CD4-positive, alpha-beta memory T cell (primary cell): ENCODE measurements at regions of chr1 and their contacts with region 1.

Region 1: GRCh38 chr1:86913896-86914634 is at the start of gene SELENOF:
- DNase-seq: peak; percentile 98 to 100 (median 99)
- H3K4me3 ChIP-seq: peak within 1 kb of the TSS; percentile 82 to 91
- H3K4me3 Mint-ChIP-seq: no peak within 1 kb of the TSS
- H3K27ac ChIP-seq: peak within 1 kb of the TSS; percentile 81
- H3K27ac Mint-ChIP-seq: peak within 1 kb of the TSS in 1 of 7 donors; percentile 31
- H3K4me1 ChIP-seq: peaks cover 47% of the 10 kb centered on the region
- H3K4me1 Mint-ChIP-seq: peaks cover 29 to 43% (median 41%) of the 10 kb centered on the region in 4 donors
- H3K27me3 ChIP-seq: no peaks in the 10 kb centered on the region
- H3K27me3 Mint-ChIP-seq: no peaks in the 10 kb centered on the region
- total RNA-seq, gene SELENOF: 151 to 169 TPM

Region 2: GRCh38 chr1:86389307-86389706 is 524.8 kb before region 1 on chr1:
- CTCF ChIA-PET with region 1: interaction called, 3 read pairs
- POLR2A ChIA-PET with region 1: interaction called, 10 read pairs
- intact Hi-C with region 1: no loop called
- DNase-seq: peak in 4 of 5 donors; percentile 51 to 66 (median 55)
- H3K4me3 ChIP-seq: peak overlapping the region; percentile 9 to 12
- H3K4me3 Mint-ChIP-seq: peak overlapping the region; percentile 59 to 88 (median 83)
- H3K27ac ChIP-seq: peak overlapping the region; percentile 39
- H3K27ac Mint-ChIP-seq: peak overlapping the region; percentile 82 to 98 (median 93)
- H3K4me1 ChIP-seq: peaks cover 67% of the 10 kb centered on the region
- H3K4me1 Mint-ChIP-seq: peaks cover 45 to 68% (median 50%) of the 10 kb centered on the region in 4 donors
- H3K27me3 ChIP-seq: no peaks in the 10 kb centered on the region
- H3K27me3 Mint-ChIP-seq: no peaks in the 10 kb centered on the region

Region 3: DNA sequence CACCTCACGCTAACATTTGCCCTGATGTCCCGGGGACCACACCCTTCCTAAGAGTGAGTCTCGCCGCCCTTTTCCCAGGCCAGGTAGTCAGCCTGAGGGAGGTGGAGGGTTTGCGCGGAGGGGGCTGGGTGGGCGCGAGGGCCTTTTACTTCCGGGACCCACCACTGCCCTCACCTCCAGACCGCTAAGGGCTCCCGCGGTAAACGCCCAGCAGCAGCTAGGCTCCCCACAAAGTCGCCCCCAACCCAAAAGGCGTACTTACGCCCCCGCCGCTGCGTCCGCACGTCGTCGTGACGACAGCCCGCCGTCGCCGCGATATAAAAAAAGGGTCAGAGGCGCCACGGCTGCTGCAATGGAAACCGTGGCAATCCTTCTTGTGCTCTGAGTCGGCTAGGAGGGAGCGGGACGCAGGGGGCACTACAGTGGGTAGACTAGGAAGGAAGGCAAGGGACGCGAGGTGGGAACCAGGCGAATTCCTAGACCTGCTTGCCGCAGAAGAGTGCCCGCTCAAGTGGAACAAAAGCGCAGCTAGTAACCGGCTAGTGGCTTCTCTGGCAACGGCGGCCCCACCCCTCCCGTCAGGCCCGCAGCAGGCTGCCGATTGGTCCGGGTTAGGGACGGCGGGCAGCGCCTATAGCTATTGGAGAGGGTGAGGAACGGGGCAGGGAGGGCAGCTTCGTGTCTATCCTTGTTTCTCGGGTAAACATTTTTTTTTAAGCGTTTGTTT is 518.1 kb before region 1 on chr1 and contains the start of gene ODF2L:
- CTCF ChIA-PET with region 1: no interaction called
- POLR2A ChIA-PET with region 1: interaction called, 15 read pairs
- intact Hi-C with region 1: loop called (anchors 1 kb)
- DNase-seq: peak; percentile 90 to 94 (median 92)
- H3K4me3 ChIP-seq: peak within 1 kb of the TSS; percentile 77 to 87
- H3K4me3 Mint-ChIP-seq: peak within 1 kb of the TSS; percentile 94 to 99 (median 98)
- H3K27ac ChIP-seq: peak within 1 kb of the TSS; percentile 92
- H3K27ac Mint-ChIP-seq: peak within 1 kb of the TSS; percentile 97 to 100 (median 99)
- H3K4me1 ChIP-seq: peaks cover 56% of the 10 kb centered on the region
- H3K4me1 Mint-ChIP-seq: peaks cover 43 to 68% (median 51%) of the 10 kb centered on the region in 4 donors
- H3K27me3 ChIP-seq: no peaks in the 10 kb centered on the region
- H3K27me3 Mint-ChIP-seq: no peaks in the 10 kb centered on the region
- total RNA-seq, gene ODF2L: 97.3 to 98.3 TPM

Region 4: DNA sequence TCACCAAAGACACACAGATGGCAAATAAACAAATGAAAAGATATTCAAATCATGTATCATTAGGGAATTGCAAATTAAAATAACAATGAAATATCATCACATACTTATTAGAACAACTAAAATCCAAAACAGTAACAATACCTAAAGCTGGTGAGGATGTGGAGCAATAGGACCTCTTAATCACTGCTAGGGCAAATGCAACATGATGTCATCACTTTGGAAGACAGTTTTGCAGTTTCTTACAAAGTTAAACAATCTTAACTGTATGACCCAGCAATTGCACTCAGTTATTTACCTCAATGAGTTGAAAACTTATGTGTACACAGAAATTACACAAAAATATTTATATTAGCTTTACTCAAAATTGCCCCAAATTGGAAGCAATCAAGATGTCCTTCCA is 47.4 kb before region 1 on chr1:
- CTCF ChIA-PET with region 1: no interaction called
- POLR2A ChIA-PET with region 1: no interaction called
- intact Hi-C with region 1: loop called (anchors 10 kb)
- DNase-seq: no peak
- H3K4me3 ChIP-seq: no peak overlapping the region
- H3K4me3 Mint-ChIP-seq: no peak overlapping the region
- H3K27ac ChIP-seq: no peak overlapping the region
- H3K27ac Mint-ChIP-seq: peak overlapping the region in 2 of 7 donors; percentile 21 to 82
- H3K4me1 ChIP-seq: no peaks in the 10 kb centered on the region
- H3K4me1 Mint-ChIP-seq: peaks cover 10 to 22% (median 17%) of the 10 kb centered on the region in 4 donors
- H3K27me3 ChIP-seq: no peaks in the 10 kb centered on the region
- H3K27me3 Mint-ChIP-seq: no peaks in the 10 kb centered on the region

Region 5: GRCh38 chr1:87024936-87025540 is 111.0 kb after region 1 on chr1:
- CTCF ChIA-PET with region 1: no interaction called
- POLR2A ChIA-PET with region 1: no interaction called
- intact Hi-C with region 1: no loop called
- DNase-seq: peak in 2 of 5 donors; percentile 3 to 4
- H3K4me3 ChIP-seq: no peak overlapping the region
- H3K4me3 Mint-ChIP-seq: no peak overlapping the region
- H3K27ac ChIP-seq: no peak overlapping the region
- H3K27ac Mint-ChIP-seq: no peak overlapping the region
- H3K4me1 ChIP-seq: no peaks in the 10 kb centered on the region
- H3K4me1 Mint-ChIP-seq: peaks cover 0 to 6% (median 1%) of the 10 kb centered on the region in 4 donors
- H3K27me3 ChIP-seq: no peaks in the 10 kb centered on the region
- H3K27me3 Mint-ChIP-seq: no peaks in the 10 kb centered on the region

Region 6: GRCh38 chr1:87045761-87046304 is 131.8 kb after region 1 on chr1:
- CTCF ChIA-PET with region 1: no interaction called
- POLR2A ChIA-PET with region 1: interaction called, 5 read pairs
- intact Hi-C with region 1: loop called (anchors 10 kb)
- DNase-seq: peak; percentile 68 to 83 (median 76)
- H3K4me3 ChIP-seq: no peak overlapping the region
- H3K4me3 Mint-ChIP-seq: peak overlapping the region in 7 of 8 donors; percentile 34 to 78 (median 44)
- H3K27ac ChIP-seq: no peak overlapping the region
- H3K27ac Mint-ChIP-seq: peak overlapping the region; percentile 62 to 98 (median 96)
- H3K4me1 ChIP-seq: peaks cover 22% of the 10 kb centered on the region
- H3K4me1 Mint-ChIP-seq: peaks cover 29 to 41% (median 35%) of the 10 kb centered on the region in 4 donors
- H3K27me3 ChIP-seq: no peaks in the 10 kb centered on the region
- H3K27me3 Mint-ChIP-seq: no peaks in the 10 kb centered on the region

Region 7: GRCh38 chr1:87084244-87084836 is 170.3 kb after region 1 on chr1:
- CTCF ChIA-PET with region 1: interaction called, 7 read pairs
- POLR2A ChIA-PET with region 1: interaction called, 3 read pairs
- intact Hi-C with region 1: loop called (anchors 10 kb)
- DNase-seq: peak in 4 of 5 donors; percentile 43 to 46 (median 44)
- H3K4me3 ChIP-seq: no peak overlapping the region
- H3K4me3 Mint-ChIP-seq: no peak overlapping the region
- H3K27ac ChIP-seq: no peak overlapping the region
- H3K27ac Mint-ChIP-seq: no peak overlapping the region
- H3K4me1 ChIP-seq: no peaks in the 10 kb centered on the region
- H3K4me1 Mint-ChIP-seq: peaks cover 0 to 3% (median 1%) of the 10 kb centered on the region in 4 donors
- H3K27me3 ChIP-seq: no peaks in the 10 kb centered on the region
- H3K27me3 Mint-ChIP-seq: no peaks in the 10 kb centered on the region

Region 8: DNA sequence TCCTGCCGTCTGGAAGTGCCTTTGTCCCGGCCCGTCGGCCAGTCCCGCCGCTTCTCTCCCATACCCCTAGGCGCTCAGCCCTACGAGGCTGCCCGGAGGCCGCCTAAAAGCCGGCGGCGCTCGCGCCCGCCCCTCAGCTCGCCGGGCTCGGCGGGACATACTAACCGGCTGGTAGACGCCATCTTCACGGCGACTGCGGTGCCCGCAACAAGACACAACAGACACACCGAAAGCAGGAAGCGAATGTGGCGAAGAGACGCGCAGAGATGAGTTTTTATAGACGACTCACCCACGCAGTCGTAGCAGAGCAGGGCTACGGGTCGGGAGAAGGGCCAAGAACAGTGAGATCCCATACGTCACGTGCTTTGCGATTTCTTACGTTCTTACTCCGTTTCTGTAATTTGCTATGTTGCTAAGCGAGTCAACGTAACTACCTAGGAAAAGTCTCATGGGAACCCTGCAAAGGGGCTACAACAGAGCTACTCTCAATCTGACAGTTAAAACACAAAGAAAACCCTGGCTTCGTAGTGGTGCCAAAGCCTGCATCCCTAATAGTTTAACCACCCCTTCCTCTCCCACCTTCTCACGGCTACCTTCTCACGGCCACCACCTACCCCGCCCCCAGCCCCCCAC is 1977.4 kb after region 1 on chr1 and contains the start of gene GTF2B:
- CTCF ChIA-PET with region 1: no interaction called
- POLR2A ChIA-PET with region 1: no interaction called
- intact Hi-C with region 1: loop called (anchors 2 kb)
- DNase-seq: peak; percentile 92 to 96 (median 95)
- H3K4me3 ChIP-seq: peak within 1 kb of the TSS; percentile 84 to 90
- H3K4me3 Mint-ChIP-seq: peak within 1 kb of the TSS; percentile 90 to 99 (median 98)
- H3K27ac ChIP-seq: peak within 1 kb of the TSS; percentile 94
- H3K27ac Mint-ChIP-seq: peak within 1 kb of the TSS; percentile 94 to 99 (median 98)
- H3K4me1 ChIP-seq: peaks cover 42% of the 10 kb centered on the region
- H3K4me1 Mint-ChIP-seq: peaks cover 33 to 50% (median 42%) of the 10 kb centered on the region in 4 donors
- H3K27me3 ChIP-seq: no peaks in the 10 kb centered on the region
- H3K27me3 Mint-ChIP-seq: peaks cover 0 to 2% of the 10 kb centered on the region in 2 donors
- total RNA-seq, gene GTF2B: 43.9 to 48.3 TPM